ENCODE measurements at regions of chr20 and their contacts with region 1.

Region 1: DNA sequence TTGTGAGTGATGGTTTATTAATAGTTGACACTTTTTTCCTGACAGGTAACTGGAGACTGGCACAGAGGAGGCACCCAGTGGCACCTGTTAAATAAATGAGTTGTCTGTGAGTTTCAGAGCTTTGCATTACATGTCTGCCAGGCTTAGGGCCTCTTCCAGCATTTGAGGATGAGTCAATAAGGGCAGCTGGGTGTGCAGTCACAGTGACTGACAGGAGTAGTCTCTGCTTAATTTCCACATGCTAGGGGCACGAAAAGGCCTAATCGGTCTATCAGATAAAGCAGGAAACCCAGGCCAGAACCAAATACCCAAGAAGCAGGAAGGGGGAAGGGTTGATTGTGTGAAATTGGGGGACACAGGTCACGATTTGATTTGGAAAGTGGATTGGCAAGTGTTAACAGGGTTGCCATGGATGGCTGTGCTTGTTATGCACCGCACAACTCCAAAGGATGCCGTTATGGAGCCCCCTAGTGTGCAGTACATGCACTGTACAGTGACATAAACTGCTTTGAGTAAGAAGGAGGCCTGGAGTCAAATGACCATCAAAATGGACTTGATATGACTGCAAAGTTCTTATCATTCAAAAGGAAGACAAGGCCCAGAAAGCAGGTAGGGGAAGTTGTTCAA is 111.9 kb upstream of the GGTLC1 start:
- DNase-seq: peak; percentile 63 to 69
- H3K4me3 ChIP-seq: no peak overlapping the region
- H3K4me3 Mint-ChIP-seq: no peak overlapping the region
- H3K27ac Mint-ChIP-seq: no peak overlapping the region
- H3K4me1 ChIP-seq: peaks cover 18% of the 10 kb centered on the region
- H3K4me1 Mint-ChIP-seq: peaks cover 16% of the 10 kb centered on the region
- H3K27me3 ChIP-seq: no peaks in the 10 kb centered on the region
- H3K27me3 Mint-ChIP-seq: no peaks in the 10 kb centered on the region
- CTCF ChIP-seq: peak; percentile 77 to 82

Region 2: GRCh38 chr20:23937303-23938117 is 163.0 kb before region 1 on chr20:
- CTCF ChIA-PET with region 1: no interaction called
- POLR2A ChIA-PET with region 1: no interaction called
- intact Hi-C with region 1: loop called (anchors 1 kb)
- DNase-seq: peak; percentile 76 to 79
- H3K4me3 ChIP-seq: no peak overlapping the region
- H3K4me3 Mint-ChIP-seq: no peak overlapping the region
- H3K27ac Mint-ChIP-seq: no peak overlapping the region
- H3K4me1 ChIP-seq: no peaks in the 10 kb centered on the region
- H3K4me1 Mint-ChIP-seq: no peaks in the 10 kb centered on the region
- H3K27me3 ChIP-seq: no peaks in the 10 kb centered on the region
- H3K27me3 Mint-ChIP-seq: peaks cover 6% of the 10 kb centered on the region
- CTCF ChIP-seq: peak; percentile 83 to 90

Region 3: DNA sequence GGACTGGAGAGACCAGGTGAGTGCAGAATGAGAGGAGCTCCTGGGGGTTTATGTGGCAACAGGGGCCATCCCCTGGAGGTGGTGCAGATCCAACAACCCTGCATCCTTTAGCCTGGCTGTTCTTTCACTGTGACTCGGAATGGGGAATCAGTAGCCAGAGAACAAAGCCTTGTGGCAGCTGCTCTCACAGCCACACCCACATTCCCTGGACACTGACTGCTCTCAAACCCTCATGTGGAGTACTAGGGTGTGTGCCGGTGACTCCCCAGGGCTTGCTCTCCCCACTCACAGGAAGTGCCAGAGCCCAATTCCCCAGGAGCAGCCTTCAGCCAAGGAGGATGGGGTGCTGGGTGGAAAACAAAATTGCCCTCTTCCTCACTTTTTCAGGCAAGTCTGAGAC is 81.7 kb before region 1 on chr20:
- CTCF ChIA-PET with region 1: no interaction called
- POLR2A ChIA-PET with region 1: no interaction called
- intact Hi-C with region 1: no loop called
- DNase-seq: no peak
- H3K4me3 ChIP-seq: no peak overlapping the region
- H3K4me3 Mint-ChIP-seq: no peak overlapping the region
- H3K27ac Mint-ChIP-seq: no peak overlapping the region
- H3K4me1 ChIP-seq: 0 out of 2 replicates have a peak, but pooled peaks cover 8% of the 10 kb centered on the region
- H3K4me1 Mint-ChIP-seq: peaks cover 5% of the 10 kb centered on the region
- H3K27me3 ChIP-seq: no peaks in the 10 kb centered on the region
- H3K27me3 Mint-ChIP-seq: peaks cover 29% of the 10 kb centered on the region
- CTCF ChIP-seq: no peak

Region 4: DNA sequence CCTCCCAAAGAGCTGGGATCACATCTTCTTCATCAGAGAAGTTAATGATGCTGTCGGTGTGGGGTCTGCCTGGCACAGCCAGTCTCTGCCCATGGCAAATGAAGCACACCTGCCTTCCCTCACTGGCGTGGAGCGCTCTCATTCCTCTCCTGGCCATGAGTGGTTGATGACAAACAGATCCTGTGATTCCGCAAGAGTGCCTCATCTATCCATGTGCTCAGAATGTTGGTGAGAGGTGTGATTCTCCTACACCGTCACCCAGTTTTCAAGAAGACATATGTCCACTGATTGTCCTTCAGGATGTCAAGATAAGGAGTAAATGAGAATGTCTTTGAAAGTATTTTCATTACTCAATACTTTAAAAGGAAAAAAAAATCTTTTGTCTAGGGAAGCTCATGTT is 14.4 kb before region 1 on chr20:
- CTCF ChIA-PET with region 1: interaction called, 3 read pairs
- POLR2A ChIA-PET with region 1: interaction called, 3 read pairs
- intact Hi-C with region 1: loop called (anchors 2 kb)
- DNase-seq: peak; percentile 61 to 62
- H3K4me3 ChIP-seq: no peak overlapping the region
- H3K4me3 Mint-ChIP-seq: no peak overlapping the region
- H3K27ac Mint-ChIP-seq: no peak overlapping the region
- H3K4me1 ChIP-seq: peaks cover 25% of the 10 kb centered on the region
- H3K4me1 Mint-ChIP-seq: peaks cover 9% of the 10 kb centered on the region
- H3K27me3 ChIP-seq: no peaks in the 10 kb centered on the region
- H3K27me3 Mint-ChIP-seq: no peaks in the 10 kb centered on the region
- CTCF ChIP-seq: no peak

Region 5: DNA sequence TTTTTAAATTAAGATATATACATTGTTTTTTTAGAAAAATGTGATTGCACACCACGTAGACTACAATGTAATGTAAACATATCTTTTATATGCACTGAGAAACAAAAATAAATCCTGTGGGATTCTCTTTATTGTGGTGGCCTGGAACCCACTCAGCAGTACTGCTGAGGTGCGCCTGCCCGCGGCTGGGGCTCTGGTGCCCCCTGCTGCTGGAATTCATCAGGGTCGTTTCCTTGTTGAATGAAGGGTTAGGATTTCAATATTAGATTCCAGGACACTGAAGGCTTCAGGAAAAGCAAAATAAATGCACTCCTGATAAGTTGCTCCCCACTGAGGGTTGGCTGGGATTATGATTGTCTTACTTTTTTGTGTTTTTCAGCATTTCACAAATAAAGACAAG is 63.9 kb after region 1 on chr20:
- CTCF ChIA-PET with region 1: no interaction called
- POLR2A ChIA-PET with region 1: no interaction called
- intact Hi-C with region 1: loop called (anchors 1 kb)
- DNase-seq: peak; percentile 54 to 67
- H3K4me3 ChIP-seq: no peak overlapping the region
- H3K4me3 Mint-ChIP-seq: no peak overlapping the region
- H3K27ac Mint-ChIP-seq: no peak overlapping the region
- H3K4me1 ChIP-seq: no peaks in the 10 kb centered on the region
- H3K4me1 Mint-ChIP-seq: no peaks in the 10 kb centered on the region
- H3K27me3 ChIP-seq: no peaks in the 10 kb centered on the region
- H3K27me3 Mint-ChIP-seq: peaks cover 3% of the 10 kb centered on the region
- CTCF ChIP-seq: peak; percentile 56 to 80